GM12878 (cell line): ENCODE measurements at regions of chr1 and their contacts with region 1.

Region 1: GRCh38 chr1:231211005-231211857 is 29.8 kb upstream of the GNPAT start:
- DNase-seq: peak; percentile 86
- ATAC-seq: peak; percentile 93
- H3K4me3 ChIP-seq: peak overlapping the region; percentile 39; the same call in 1 of the 2 replicates
- H3K27ac ChIP-seq: peak overlapping the region; percentile 12; the same call in 1 of the 2 replicates
- H3K4me1 ChIP-seq: peaks cover 12% of the 10 kb centered on the region
- H3K27me3 ChIP-seq: no peaks in the 10 kb centered on the region
- CTCF ChIP-seq: peak; percentile 89 to 90 (median 90)
- EP300 ChIP-seq: no peak
- POLR2A ChIP-seq: 0 out of 2 replicates have a peak, but pooled peaks have one; percentile 39
- RAD21 ChIP-seq: peak; percentile 88

Region 2: DNA sequence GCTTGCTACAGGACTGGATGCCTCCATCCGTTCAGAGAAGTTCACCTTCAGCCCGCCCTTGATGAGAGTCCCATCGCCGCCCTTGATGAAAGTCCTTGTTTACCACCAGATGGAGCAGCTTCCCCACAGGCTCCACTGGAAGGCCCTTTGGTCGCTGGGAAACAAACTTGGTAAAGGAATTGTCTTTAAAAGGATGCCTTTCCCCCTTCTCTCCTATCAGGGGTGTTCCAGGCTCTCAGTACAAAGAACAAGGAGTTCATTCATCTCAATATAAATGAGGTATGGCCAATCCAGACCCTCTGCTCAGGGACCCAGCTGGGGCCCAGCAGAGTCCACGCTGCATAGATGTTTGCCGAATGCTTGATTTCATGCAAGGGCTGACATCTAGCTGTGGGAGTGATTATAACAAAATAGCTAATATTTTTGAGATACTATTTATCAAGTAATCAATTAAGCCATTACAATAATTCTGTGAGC is 413.3 kb before region 1 on chr1:
- CTCF ChIA-PET with region 1: interaction called, 3 read pairs
- POLR2A ChIA-PET with region 1: no interaction called
- RAD21 ChIA-PET with region 1: interaction called, 3 read pairs
- SMC1A ChIA-PET with region 1: no interaction called
- in situ Hi-C with region 1: no loop called
- intact Hi-C with region 1: loop called (anchors 2 kb)
- DNase-seq: no peak
- ATAC-seq: peak; percentile 42; the same call in 2 of the 3 replicates
- H3K4me3 ChIP-seq: no peak overlapping the region
- H3K27ac ChIP-seq: no peak overlapping the region
- H3K4me1 ChIP-seq: no peaks in the 10 kb centered on the region
- H3K27me3 ChIP-seq: no peaks in the 10 kb centered on the region; a peak in 1 of 4 replicates
- CTCF ChIP-seq: peak; percentile 13 to 36 (median 24); a peak in 4 of 6 replicates
- EP300 ChIP-seq: no peak
- POLR2A ChIP-seq: no peak
- RAD21 ChIP-seq: peak; percentile 53

Region 3: GRCh38 chr1:230922620-230923019 is 288.6 kb before region 1 on chr1:
- CTCF ChIA-PET with region 1: interaction called, 30 read pairs
- POLR2A ChIA-PET with region 1: no interaction called
- RAD21 ChIA-PET with region 1: no interaction called
- SMC1A ChIA-PET with region 1: interaction called, 4 read pairs
- in situ Hi-C with region 1: loop called (anchors 5 kb)
- intact Hi-C with region 1: loop called (anchors 1 kb)
- DNase-seq: no peak
- ATAC-seq: no peak
- H3K4me3 ChIP-seq: no peak overlapping the region
- H3K27ac ChIP-seq: no peak overlapping the region
- H3K4me1 ChIP-seq: no peaks in the 10 kb centered on the region
- H3K27me3 ChIP-seq: no peaks in the 10 kb centered on the region
- CTCF ChIP-seq: peak in 1 of 3 experiments; percentile 18; a peak in 2 of 6 replicates
- EP300 ChIP-seq: no peak
- POLR2A ChIP-seq: no peak
- RAD21 ChIP-seq: no peak

Region 4: GRCh38 chr1:231091831-231092301 is 119.4 kb before region 1 on chr1:
- CTCF ChIA-PET with region 1: interaction called, 11 read pairs
- POLR2A ChIA-PET with region 1: no interaction called
- RAD21 ChIA-PET with region 1: interaction called, 3 read pairs
- SMC1A ChIA-PET with region 1: interaction called, 3 read pairs
- in situ Hi-C with region 1: no loop called
- intact Hi-C with region 1: no loop called
- DNase-seq: no peak
- ATAC-seq: peak; percentile 83
- H3K4me3 ChIP-seq: no peak overlapping the region
- H3K27ac ChIP-seq: no peak overlapping the region
- H3K4me1 ChIP-seq: no peaks in the 10 kb centered on the region
- H3K27me3 ChIP-seq: no peaks in the 10 kb centered on the region; a peak in 1 of 4 replicates
- CTCF ChIP-seq: peak; percentile 73 to 92 (median 85)
- EP300 ChIP-seq: no peak
- POLR2A ChIP-seq: no peak
- RAD21 ChIP-seq: peak; percentile 51

Region 5: DNA sequence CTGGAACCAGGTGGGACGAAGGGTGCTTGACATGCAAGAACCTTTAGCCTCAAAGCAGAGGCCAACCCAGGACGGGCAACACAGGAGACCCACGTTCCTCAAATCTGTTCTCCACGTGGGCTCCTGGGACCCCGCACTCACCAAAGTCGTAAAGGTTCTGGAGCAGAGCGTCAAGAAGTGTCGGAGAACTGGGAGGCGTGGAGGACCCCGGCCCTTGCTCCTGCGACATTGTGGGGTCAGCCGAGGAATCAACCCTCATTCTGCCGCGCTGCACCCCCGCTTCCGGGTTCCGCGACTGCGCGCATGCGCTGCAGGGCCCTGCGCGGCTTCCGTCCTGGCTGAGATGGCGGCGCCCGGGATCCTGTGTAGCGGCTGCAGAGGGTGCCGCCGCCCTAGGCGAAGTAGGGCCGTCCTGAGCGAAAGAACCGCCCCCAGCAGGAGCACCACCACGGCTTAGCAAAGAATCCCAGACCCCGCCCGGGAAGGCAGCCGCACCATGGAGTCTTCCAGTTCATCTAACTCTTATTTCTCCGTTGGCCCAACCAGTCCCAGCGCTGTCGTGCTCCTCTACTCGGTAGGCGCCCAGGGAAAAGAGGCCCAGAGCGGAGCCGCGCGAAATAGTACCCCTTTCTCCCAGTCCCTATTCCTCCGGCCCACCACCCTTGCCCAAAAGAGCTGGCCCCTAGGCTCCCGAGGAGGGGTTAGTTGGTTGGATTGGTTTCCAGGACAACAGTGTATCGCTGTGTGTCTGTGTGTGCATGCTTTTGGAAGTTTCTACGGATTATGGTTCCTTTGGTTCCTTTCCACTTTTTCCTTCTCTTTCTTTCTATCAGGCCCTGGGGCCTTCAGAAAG is 29.9 kb after region 1 on chr1 and contains the start of gene GNPAT:
- CTCF ChIA-PET with region 1: interaction called, 13 read pairs
- POLR2A ChIA-PET with region 1: no interaction called
- RAD21 ChIA-PET with region 1: interaction called, 5 read pairs
- SMC1A ChIA-PET with region 1: interaction called, 6 read pairs
- in situ Hi-C with region 1: no loop called
- intact Hi-C with region 1: no loop called
- DNase-seq: peak; percentile 50
- ATAC-seq: peak; percentile 96
- H3K4me3 ChIP-seq: peak within 1 kb of the TSS; percentile 98
- H3K27ac ChIP-seq: peak within 1 kb of the TSS; percentile 72
- H3K4me1 ChIP-seq: peaks cover 5% of the 10 kb centered on the region; the same call in 1 of the 2 replicates
- H3K27me3 ChIP-seq: no peaks in the 10 kb centered on the region
- CTCF ChIP-seq: no peak
- EP300 ChIP-seq: no peak
- POLR2A ChIP-seq: peak; percentile 99
- RAD21 ChIP-seq: no peak
- polyA plus RNA-seq, gene GNPAT: 24.0 to 30.1 TPM

Region 6: DNA sequence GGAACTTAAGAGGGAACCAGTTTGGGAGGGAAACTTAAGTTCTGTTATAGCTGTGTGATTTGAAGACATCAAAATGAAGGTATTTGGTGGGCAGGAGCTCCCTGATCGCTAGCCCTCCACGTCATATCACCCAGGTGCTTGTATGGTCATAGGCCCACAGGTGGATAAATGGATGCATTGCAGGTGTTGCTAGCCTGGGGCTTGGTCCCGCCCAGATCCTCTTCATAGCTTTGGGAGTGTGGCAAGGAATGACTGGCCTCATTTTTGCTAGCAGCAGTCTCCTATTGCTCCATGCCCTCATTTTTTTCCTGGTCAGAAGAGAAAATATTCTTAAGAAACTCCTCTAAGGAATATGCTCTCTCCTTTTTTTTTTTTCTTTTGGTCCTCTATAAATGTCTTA is 41.1 kb after region 1 on chr1:
- CTCF ChIA-PET with region 1: no interaction called
- POLR2A ChIA-PET with region 1: no interaction called
- RAD21 ChIA-PET with region 1: no interaction called
- SMC1A ChIA-PET with region 1: no interaction called
- in situ Hi-C with region 1: no loop called
- intact Hi-C with region 1: no loop called
- DNase-seq: no peak
- ATAC-seq: no peak
- H3K4me3 ChIP-seq: no peak overlapping the region
- H3K27ac ChIP-seq: no peak overlapping the region
- H3K4me1 ChIP-seq: no peaks in the 10 kb centered on the region
- H3K27me3 ChIP-seq: no peaks in the 10 kb centered on the region
- CTCF ChIP-seq: no peak
- EP300 ChIP-seq: no peak
- POLR2A ChIP-seq: no peak
- RAD21 ChIP-seq: no peak